ENCODE measurements at regions of chr1 and their contacts with region 1.

Region 1: GRCh38 chr1:50929376-50929958 is 30.6 kb downstream of the FAF1 start:
- DNase-seq: no peak
- H3K4me3 Mint-ChIP-seq: no peak overlapping the region
- H3K27ac Mint-ChIP-seq: no peak overlapping the region
- H3K4me1 Mint-ChIP-seq: peaks cover 17% of the 10 kb centered on the region
- H3K27me3 Mint-ChIP-seq: no peaks in the 10 kb centered on the region

Region 2: DNA sequence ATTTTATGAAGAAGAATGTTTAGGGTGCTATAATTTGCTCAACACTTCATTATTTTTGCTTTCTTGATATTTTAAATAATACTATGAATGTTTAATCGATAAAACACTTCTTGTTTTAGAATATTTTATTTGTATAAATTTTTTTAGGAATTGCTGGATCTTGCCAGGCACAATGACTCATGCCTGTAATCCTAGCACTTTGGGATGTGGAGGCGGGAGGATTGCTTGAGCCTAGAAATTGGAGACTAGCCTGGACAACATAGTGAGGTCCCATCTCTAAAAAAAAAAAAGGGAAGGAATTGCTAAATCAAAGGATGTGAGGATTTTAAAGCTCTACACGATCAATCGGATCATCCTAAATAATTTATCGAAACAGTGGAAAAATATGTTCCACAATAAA is 324.2 kb after region 1 on chr1:
- CTCF ChIA-PET with region 1: no interaction called
- POLR2A ChIA-PET with region 1: interaction called, 11 read pairs
- DNase-seq: no peak
- H3K4me3 Mint-ChIP-seq: no peak overlapping the region
- H3K27ac Mint-ChIP-seq: no peak overlapping the region
- H3K4me1 Mint-ChIP-seq: peaks cover 11% of the 10 kb centered on the region
- H3K27me3 Mint-ChIP-seq: no peaks in the 10 kb centered on the region

Measured in activated CD4-positive, alpha-beta T cell treated with anti-CD3 and anti-CD28 coated beads, Interleukin-2, amount 10 ng/mL, durations not matched to agents 7 days and 5 days (primary cell).